Gastrocnemius medialis (tissue), 4 donors: ENCODE measurements at regions of chr9 and their contacts with region 1.

Region 1: GRCh38 chr9:13615660-13616490 is 336.4 kb upstream of the MPDZ start:
- DNase-seq: no peak
- ATAC-seq: no peak
- H3K4me3 ChIP-seq: no peak overlapping the region
- H3K27ac ChIP-seq: peak overlapping the region in 1 of 4 donors; percentile 23
- H3K4me1 ChIP-seq: peaks cover 11 to 22% of the 10 kb centered on the region in 2 donors
- H3K27me3 ChIP-seq: no peaks in the 10 kb centered on the region
- CTCF ChIP-seq: no peak
- POLR2A ChIP-seq: no peak

Region 2: DNA sequence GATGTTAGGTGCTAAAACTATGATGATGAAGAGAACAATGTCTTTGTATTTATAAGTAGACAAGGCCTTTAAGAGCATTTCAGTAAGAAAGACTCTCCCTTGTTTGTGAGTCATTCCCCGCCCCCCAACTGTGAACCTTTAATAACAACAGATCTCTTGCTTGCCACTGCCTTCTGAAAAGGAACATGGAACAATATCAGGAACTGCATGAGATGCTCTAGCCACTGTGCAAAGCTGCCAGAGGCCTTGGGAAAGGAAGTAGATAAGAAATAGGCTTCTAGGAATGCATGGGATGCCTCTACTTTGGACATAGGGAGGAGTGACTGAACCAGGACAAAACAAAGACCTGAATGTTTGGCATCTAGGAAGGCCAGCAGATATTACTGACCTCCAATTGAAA is 40.3 kb before region 1 on chr9:
- in situ Hi-C with region 1: no loop called
- intact Hi-C with region 1: no loop called
- DNase-seq: no peak
- ATAC-seq: peak; percentile 33 to 74
- H3K4me3 ChIP-seq: no peak overlapping the region
- H3K27ac ChIP-seq: peak overlapping the region in 3 of 4 donors; percentile 25 to 63 (median 49)
- H3K4me1 ChIP-seq: peaks cover 0 to 4% of the 10 kb centered on the region in 2 donors
- H3K27me3 ChIP-seq: no peaks in the 10 kb centered on the region
- CTCF ChIP-seq: no peak
- POLR2A ChIP-seq: no peak

Region 3: DNA sequence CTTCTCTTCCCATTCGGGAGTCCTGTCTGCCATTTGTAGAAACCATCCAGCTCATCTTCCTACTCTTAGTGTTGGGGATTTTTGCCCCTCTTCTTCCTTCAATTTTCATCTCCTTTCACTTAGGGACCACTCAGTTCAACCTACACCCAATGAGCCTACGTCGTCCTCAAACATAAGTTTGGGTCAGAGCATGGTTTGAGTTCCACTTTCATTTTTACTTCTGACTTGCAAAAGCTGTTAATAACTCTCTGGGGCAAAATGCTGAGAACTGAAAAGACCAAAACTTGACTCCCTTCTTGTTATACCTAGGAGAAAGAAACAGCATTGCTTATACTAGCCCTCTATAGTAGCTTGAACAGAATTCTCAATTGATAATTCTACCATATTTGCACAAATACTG is 45.1 kb after region 1 on chr9:
- in situ Hi-C with region 1: no loop called
- intact Hi-C with region 1: no loop called
- DNase-seq: no peak
- ATAC-seq: no peak
- H3K4me3 ChIP-seq: peak overlapping the region; percentile 7 to 32 (median 24)
- H3K27ac ChIP-seq: peak overlapping the region in 3 of 4 donors; percentile 15 to 31 (median 26)
- H3K4me1 ChIP-seq: peaks cover 6 to 7% of the 10 kb centered on the region in 2 donors
- H3K27me3 ChIP-seq: no peaks in the 10 kb centered on the region
- CTCF ChIP-seq: no peak
- POLR2A ChIP-seq: no peak

Region 4: DNA sequence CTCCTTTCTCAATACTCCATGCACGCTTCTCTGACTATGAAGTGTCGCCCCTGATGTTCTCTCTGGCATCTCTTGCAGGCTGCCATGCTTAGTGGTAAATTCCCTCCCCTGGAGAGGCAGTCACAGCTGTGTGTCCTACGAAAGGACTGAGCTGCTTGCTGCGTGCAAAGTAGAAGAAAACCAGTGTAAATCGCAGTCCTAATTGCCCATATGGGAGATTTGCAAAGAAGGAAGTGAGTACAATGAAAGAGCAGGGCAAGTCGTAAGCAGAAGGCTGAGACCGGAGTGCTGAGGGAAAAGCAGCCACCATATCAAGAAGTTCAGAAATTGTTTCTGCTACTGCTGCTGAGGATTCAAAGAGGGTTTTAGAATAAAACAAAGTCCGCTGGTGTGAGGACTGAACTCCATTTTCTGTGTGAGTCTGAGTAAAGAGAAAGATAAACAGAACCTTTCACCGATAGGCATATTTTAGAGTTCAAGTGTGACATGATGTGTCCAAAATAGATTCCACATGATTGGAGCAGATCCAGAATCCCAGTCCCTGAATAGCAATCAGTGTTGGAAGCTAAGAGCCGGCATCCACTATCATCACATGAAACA is 171.5 kb after region 1 on chr9:
- in situ Hi-C with region 1: no loop called
- intact Hi-C with region 1: loop called (anchors 5 kb)
- DNase-seq: peak; percentile 25 to 42
- ATAC-seq: peak; percentile 94 to 96
- H3K4me3 ChIP-seq: peak overlapping the region; percentile 37 to 45 (median 40)
- H3K27ac ChIP-seq: peak overlapping the region; percentile 73 to 84 (median 75)
- H3K4me1 ChIP-seq: peaks cover 19 to 21% of the 10 kb centered on the region in 2 donors
- H3K27me3 ChIP-seq: no peaks in the 10 kb centered on the region
- CTCF ChIP-seq: no peak
- POLR2A ChIP-seq: no peak